PC-3 (cell line): ENCODE measurements at regions of chr4 and their contacts with region 1.

Region 1: DNA sequence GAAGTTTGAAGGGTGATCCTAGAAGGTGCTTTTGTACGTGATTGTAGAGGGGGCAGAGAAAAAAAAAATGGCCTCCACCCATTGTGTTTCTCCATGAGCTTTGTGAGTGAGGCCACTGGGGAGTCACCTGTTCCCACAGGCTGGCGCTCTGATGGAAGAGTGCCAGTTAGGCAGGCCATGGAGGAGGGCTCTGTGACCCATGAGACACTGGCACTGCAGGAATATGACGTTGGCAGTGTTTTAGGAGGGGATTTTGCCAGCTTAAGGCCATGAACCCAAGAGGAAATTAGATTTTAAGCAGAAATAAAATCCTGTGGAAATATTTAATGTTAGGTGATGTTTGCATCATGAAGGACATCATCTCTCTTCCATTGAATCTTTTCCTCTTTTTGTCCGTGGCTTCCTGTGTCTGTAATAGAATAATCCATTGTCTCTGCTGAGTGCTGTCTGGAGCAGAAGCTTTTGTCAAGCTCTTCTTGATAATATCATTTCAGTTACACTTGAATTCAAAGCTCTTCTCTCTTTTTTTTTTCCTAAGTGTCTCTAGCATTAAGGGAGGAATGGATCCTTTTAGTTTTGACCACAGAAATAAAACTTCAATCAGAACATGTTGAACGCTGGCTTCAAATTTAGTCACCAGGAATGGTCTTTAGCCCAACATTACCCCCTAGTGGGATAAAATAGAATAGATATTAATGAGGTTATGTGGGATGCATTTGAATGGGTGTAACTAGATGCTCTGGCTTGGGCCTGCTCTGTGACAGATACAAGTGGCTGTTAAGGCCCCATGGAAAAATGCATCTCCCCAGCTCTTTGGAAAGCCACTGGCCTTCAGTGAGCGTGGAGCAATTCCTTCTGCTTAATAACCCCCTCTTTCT is 41.0 kb upstream of the UCP1 start:
- DNase-seq: peak; percentile 71
- ATAC-seq: peak; percentile 78
- H3K4me3 ChIP-seq: no peak overlapping the region
- H3K27ac ChIP-seq: no peak overlapping the region
- H3K4me1 ChIP-seq: peaks cover 7% of the 10 kb centered on the region; the same call in 1 of the 2 replicates
- H3K27me3 ChIP-seq: no peaks in the 10 kb centered on the region
- CTCF ChIP-seq: peak; percentile 63

Region 2: GRCh38 chr4:140326395-140326993 is 283.3 kb before region 1 on chr4:
- CTCF ChIA-PET with region 1: no interaction called
- POLR2A ChIA-PET with region 1: no interaction called
- intact Hi-C with region 1: loop called (anchors 1 kb)
- DNase-seq: peak; percentile 59
- ATAC-seq: peak; percentile 86
- H3K4me3 ChIP-seq: no peak overlapping the region
- H3K27ac ChIP-seq: no peak overlapping the region
- H3K4me1 ChIP-seq: no peaks in the 10 kb centered on the region
- H3K27me3 ChIP-seq: no peaks in the 10 kb centered on the region
- CTCF ChIP-seq: peak; percentile 82

Region 3: DNA sequence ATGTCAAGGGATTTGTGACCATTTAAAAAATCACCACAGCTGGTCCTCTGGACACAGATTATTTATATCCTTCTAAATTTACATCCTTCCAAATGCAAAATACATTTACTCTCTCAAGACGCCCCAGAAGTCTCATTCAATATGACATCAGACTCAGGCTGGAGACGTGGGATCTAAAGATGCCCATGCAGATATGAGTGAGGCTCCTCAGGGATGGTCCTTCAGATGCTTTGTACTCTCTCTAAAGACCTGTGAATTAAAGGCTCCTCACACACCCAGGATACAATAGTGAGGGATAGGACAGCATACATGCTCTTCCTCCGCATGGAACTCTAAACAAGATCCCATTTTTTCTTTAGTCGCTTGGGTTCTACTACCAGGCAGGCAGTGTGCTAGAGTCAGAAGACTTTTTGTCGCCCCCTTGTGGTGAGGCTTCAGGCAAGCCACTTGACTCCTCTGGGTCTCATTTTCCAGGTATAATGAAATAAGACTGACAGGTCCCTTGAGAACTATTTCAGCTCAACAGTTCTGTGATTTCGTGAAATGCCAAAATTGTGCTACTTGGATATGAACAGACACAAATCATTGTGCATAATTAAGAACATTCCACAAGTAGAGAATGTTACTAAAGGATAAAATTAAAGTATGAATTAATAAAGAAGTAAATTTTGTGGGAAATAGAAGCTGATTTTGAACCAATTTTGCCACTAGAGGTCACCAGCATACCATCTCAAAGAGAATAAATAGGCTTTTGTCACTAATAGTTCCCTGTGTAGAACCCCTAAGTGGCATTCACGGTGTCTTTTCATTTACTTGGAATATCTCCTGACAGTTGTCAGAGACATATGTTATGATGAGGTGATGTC is 250.0 kb before region 1 on chr4:
- CTCF ChIA-PET with region 1: interaction called, 4 read pairs
- POLR2A ChIA-PET with region 1: no interaction called
- intact Hi-C with region 1: loop called (anchors 1 kb)
- DNase-seq: peak; percentile 86
- ATAC-seq: peak; percentile 95
- H3K4me3 ChIP-seq: no peak overlapping the region
- H3K27ac ChIP-seq: no peak overlapping the region
- H3K4me1 ChIP-seq: no peaks in the 10 kb centered on the region
- H3K27me3 ChIP-seq: no peaks in the 10 kb centered on the region
- CTCF ChIP-seq: peak; percentile 89

Region 4: DNA sequence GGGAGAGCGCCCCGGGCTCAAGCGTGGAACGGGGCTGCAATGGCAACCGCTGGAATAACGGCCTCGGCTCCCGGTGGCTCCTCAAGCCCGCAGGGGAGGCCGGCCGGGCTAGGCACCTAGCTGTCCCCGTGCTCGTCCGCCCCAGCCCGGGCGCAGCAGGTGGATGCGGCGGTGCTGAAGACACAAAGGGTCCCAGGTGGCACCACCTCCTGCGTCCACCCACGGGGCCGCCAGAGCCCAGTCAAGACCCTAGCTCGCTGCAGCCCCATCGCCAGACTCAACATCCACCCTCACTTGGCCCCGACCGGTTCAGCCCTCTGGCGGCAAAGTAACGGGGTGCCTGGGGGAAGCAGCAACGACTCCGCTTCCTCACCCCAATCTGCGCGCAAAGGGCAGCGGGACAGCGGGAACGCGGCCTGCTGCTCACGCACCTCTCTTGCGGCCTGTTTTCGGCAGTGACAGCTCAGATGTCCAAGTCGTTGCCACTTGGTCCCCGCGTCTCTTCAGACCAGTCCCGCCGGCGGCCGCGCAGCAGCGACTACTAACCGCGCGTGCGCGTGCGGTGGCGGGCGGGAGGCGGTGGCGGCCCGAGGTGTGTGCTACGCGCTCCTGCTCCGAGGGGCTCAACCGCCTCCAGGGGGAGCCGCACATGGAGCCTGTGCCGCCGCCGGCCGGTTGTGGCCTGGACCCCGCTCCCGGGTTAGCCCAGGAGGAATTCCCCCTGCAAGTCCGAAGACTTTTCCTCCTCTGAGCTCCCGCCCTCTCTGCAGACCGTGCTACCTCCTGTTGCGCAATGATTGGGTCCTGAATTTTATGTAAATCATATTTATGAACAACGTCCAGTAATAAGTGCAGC is 182.5 kb before region 1 on chr4 and contains the start of gene CLGN:
- CTCF ChIA-PET with region 1: no interaction called
- POLR2A ChIA-PET with region 1: no interaction called
- intact Hi-C with region 1: loop called (anchors 5 kb)
- DNase-seq: peak; percentile 66
- ATAC-seq: peak; percentile 76
- H3K4me3 ChIP-seq: peak within 1 kb of the TSS; percentile 93
- H3K27ac ChIP-seq: peak within 1 kb of the TSS; percentile 25; the same call in 1 of the 2 replicates
- H3K4me1 ChIP-seq: peaks cover 40% of the 10 kb centered on the region
- H3K27me3 ChIP-seq: no peaks in the 10 kb centered on the region
- CTCF ChIP-seq: peak; percentile 48; the same call in 1 of the 2 replicates
- total RNA-seq, gene CLGN: 7.9 and 9.6 TPM in 2 replicates

Region 5: GRCh38 chr4:140595065-140595464 is 14.7 kb before region 1 on chr4:
- CTCF ChIA-PET with region 1: interaction called, 3 read pairs
- POLR2A ChIA-PET with region 1: no interaction called
- intact Hi-C with region 1: loop called (anchors 1 kb)
- DNase-seq: peak; percentile 61
- ATAC-seq: peak; percentile 96
- H3K4me3 ChIP-seq: no peak overlapping the region
- H3K27ac ChIP-seq: no peak overlapping the region
- H3K4me1 ChIP-seq: no peaks in the 10 kb centered on the region
- H3K27me3 ChIP-seq: peaks cover 12% of the 10 kb centered on the region; the same call in 1 of the 2 replicates
- CTCF ChIP-seq: peak; percentile 66

Region 6: DNA sequence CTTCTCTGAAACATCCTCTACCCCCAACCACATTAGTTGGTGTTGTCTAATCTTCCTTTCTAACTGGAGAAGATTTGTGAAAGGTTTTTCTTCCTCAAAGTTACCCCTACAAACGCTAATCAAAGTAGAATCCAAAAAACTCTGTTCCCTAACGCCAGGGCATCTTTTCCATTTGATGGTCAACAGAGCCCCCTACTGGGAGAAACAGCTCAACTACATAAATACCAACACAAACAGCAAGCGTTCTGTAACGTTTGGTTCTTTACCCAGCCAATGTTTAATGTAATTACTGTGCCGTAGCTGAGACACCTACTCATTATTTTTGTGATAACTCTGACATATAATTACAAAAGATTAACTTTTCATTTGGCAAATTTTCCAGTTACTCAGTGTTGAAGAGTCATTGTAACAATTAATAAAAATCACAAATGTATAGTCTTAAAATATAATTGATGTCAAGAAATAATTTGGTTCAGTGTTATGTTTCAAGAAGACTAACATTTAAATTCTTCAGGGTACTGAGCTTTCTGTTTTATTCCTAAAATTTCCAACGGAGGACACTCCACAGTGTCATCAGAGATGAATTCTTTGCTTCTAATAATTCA is 241.3 kb after region 1 on chr4:
- CTCF ChIA-PET with region 1: no interaction called
- POLR2A ChIA-PET with region 1: no interaction called
- intact Hi-C with region 1: loop called (anchors 2 kb)
- DNase-seq: peak; percentile 83
- ATAC-seq: peak; percentile 82
- H3K4me3 ChIP-seq: no peak overlapping the region
- H3K27ac ChIP-seq: no peak overlapping the region
- H3K4me1 ChIP-seq: no peaks in the 10 kb centered on the region
- H3K27me3 ChIP-seq: no peaks in the 10 kb centered on the region
- CTCF ChIP-seq: peak; percentile 98